Activated CD4-positive, alpha-beta T cell treated with anti-CD3 and anti-CD28 coated beads, Interleukin-2, amount 10 ng/mL, durations not matched to agents 7 days and 5 days (primary cell): ENCODE measurements at regions of chr17 and their contacts with region 1.

Region 1: GRCh38 chr17:67441052-67441927 is 64.2 kb downstream of the PITPNC1 start:
- DNase-seq: peak; percentile 81
- H3K4me3 Mint-ChIP-seq: peak overlapping the region; percentile 71
- H3K27ac Mint-ChIP-seq: peak overlapping the region; percentile 97
- H3K4me1 Mint-ChIP-seq: peaks cover 76% of the 10 kb centered on the region
- H3K27me3 Mint-ChIP-seq: no peaks in the 10 kb centered on the region

Region 2: DNA sequence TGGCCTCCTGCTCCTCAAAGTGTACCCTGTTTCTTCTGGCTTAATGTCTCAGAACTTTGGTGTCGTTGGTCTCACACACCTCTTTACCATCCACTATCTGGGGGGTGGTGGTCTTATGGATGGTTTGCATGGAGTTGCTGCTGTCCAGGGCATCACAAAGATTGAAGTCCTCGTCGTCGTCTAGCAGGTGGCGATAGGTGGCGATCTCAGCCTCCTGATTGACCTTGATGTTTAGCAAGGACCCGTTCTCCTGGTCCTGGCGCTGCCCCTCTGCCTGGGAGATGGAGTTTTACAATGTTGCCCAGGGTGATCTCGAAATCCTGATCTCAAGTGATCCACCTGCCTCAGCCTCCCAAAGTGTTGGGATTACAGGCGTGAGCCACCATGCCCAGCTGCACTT is 165.2 kb before region 1 on chr17:
- CTCF ChIA-PET with region 1: no interaction called
- POLR2A ChIA-PET with region 1: no interaction called
- DNase-seq: no peak
- H3K4me3 Mint-ChIP-seq: no peak overlapping the region
- H3K27ac Mint-ChIP-seq: no peak overlapping the region
- H3K4me1 Mint-ChIP-seq: no peaks in the 10 kb centered on the region
- H3K27me3 Mint-ChIP-seq: no peaks in the 10 kb centered on the region

Region 3: DNA sequence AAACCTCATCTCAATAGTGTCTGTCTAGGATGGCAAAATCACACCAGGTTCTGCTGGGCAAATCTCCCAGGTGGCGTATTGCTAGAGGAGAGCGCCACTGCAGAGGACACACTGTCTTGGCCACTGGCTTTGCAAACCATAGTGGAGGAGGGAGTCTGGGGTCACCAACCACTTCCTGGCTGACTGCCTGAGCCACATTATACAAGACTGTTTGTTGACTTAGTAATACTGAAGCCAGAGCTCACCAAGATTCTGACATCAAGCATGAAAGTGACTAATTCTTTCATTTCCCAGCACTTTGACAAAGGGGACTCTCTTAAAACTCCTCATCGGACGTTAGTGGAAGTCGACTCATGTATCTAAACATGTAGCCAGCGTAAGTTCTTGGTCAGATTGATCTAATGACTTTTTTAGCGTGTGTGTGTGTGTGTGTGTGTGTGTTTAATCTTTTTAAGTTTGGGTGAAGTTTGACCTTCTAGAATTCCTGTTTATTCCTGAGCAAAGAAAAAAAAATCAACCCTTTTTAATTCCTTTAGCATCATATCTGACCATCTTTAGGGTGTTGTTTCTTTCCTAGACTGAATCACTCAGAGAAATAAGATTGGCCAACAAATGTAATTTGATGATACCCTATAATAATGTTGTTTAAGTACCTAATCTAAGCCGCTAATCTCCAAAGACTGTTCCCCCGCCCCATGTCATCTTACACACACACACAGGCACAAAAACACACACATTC is 50.5 kb before region 1 on chr17:
- CTCF ChIA-PET with region 1: interaction called, 4 read pairs
- POLR2A ChIA-PET with region 1: interaction called, 11 read pairs
- DNase-seq: peak; percentile 75
- H3K4me3 Mint-ChIP-seq: peak overlapping the region; percentile 68
- H3K27ac Mint-ChIP-seq: peak overlapping the region; percentile 94
- H3K4me1 Mint-ChIP-seq: peaks cover 65% of the 10 kb centered on the region
- H3K27me3 Mint-ChIP-seq: no peaks in the 10 kb centered on the region

Region 4: GRCh38 chr17:67421869-67422273 is 19.4 kb before region 1 on chr17:
- CTCF ChIA-PET with region 1: interaction called, 10 read pairs
- POLR2A ChIA-PET with region 1: no interaction called
- DNase-seq: peak; percentile 77
- H3K4me3 Mint-ChIP-seq: no peak overlapping the region
- H3K27ac Mint-ChIP-seq: peak overlapping the region; percentile 94
- H3K4me1 Mint-ChIP-seq: peaks cover 72% of the 10 kb centered on the region
- H3K27me3 Mint-ChIP-seq: no peaks in the 10 kb centered on the region

Region 5: GRCh38 chr17:67452681-67453554 is 11.6 kb after region 1 on chr17:
- CTCF ChIA-PET with region 1: interaction called, 11 read pairs
- POLR2A ChIA-PET with region 1: interaction called, 9 read pairs
- DNase-seq: peak; percentile 65
- H3K4me3 Mint-ChIP-seq: peak overlapping the region; percentile 53
- H3K27ac Mint-ChIP-seq: peak overlapping the region; percentile 97
- H3K4me1 Mint-ChIP-seq: peaks cover 90% of the 10 kb centered on the region
- H3K27me3 Mint-ChIP-seq: no peaks in the 10 kb centered on the region

Region 6: GRCh38 chr17:67487506-67487905 is 46.2 kb after region 1 on chr17:
- CTCF ChIA-PET with region 1: no interaction called
- POLR2A ChIA-PET with region 1: no interaction called
- DNase-seq: no peak
- H3K4me3 Mint-ChIP-seq: no peak overlapping the region
- H3K27ac Mint-ChIP-seq: peak overlapping the region; percentile 65
- H3K4me1 Mint-ChIP-seq: peaks cover 39% of the 10 kb centered on the region
- H3K27me3 Mint-ChIP-seq: no peaks in the 10 kb centered on the region